ENCODE measurements at regions of chr12 and their contacts with region 1.

Region 1: GRCh38 chr12:54240971-54241588 is 38.8 kb downstream of the CBX5 start:
- DNase-seq: peak; percentile 80
- ATAC-seq: peak; percentile 95
- H3K4me3 ChIP-seq: no peak overlapping the region
- H3K27ac ChIP-seq: peak overlapping the region; percentile 45
- H3K4me1 ChIP-seq: peaks cover 16% of the 10 kb centered on the region
- H3K27me3 ChIP-seq: no peaks in the 10 kb centered on the region
- CTCF ChIP-seq: no peak
- EP300 ChIP-seq: 0 out of 4 replicates have a peak, but pooled peaks of 1 of the 2 experiments have one; percentile 39
- POLR2A ChIP-seq: no peak
- RAD21 ChIP-seq: no peak

Region 2: DNA sequence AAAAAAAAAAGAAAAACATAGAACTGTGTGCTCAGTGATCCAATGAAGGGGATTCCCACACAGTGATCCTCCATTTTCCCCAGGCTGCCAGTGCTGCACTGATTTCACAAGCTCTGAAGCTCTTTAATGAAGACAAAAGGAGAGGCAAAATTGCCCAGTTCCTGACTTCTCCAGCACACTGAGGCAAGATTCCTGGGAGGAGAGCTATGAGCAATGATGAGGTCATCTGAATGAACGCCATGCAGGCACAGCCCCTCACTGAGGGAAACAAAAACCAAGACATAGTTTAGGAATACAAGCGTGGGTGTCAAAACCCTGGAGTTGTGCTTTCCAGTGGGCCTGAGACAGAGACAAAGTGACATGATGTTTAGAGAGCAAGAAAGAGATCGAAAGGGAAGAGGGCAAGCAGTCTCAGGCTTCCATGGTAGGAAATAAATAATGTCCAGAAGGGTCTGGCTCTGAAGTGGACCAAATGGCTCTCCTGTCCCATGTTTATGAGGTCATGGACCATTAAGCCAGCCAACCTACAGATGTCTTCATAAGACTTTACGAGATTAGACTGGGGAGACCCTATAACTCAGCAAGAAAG is 11.4 kb before region 1 on chr12:
- CTCF ChIA-PET with region 1: interaction called, 13 read pairs
- POLR2A ChIA-PET with region 1: interaction called, 10 read pairs
- RAD21 ChIA-PET with region 1: interaction called, 4 read pairs
- SMC1A ChIA-PET with region 1: interaction called, 9 read pairs
- in situ Hi-C with region 1: no loop called
- intact Hi-C with region 1: no loop called
- DNase-seq: no peak
- ATAC-seq: peak; percentile 81
- H3K4me3 ChIP-seq: no peak overlapping the region
- H3K27ac ChIP-seq: no peak overlapping the region
- H3K4me1 ChIP-seq: peaks cover 5% of the 10 kb centered on the region; the same call in 1 of the 2 replicates
- H3K27me3 ChIP-seq: no peaks in the 10 kb centered on the region
- CTCF ChIP-seq: no peak
- EP300 ChIP-seq: no peak
- POLR2A ChIP-seq: no peak
- RAD21 ChIP-seq: no peak

Region 3: DNA sequence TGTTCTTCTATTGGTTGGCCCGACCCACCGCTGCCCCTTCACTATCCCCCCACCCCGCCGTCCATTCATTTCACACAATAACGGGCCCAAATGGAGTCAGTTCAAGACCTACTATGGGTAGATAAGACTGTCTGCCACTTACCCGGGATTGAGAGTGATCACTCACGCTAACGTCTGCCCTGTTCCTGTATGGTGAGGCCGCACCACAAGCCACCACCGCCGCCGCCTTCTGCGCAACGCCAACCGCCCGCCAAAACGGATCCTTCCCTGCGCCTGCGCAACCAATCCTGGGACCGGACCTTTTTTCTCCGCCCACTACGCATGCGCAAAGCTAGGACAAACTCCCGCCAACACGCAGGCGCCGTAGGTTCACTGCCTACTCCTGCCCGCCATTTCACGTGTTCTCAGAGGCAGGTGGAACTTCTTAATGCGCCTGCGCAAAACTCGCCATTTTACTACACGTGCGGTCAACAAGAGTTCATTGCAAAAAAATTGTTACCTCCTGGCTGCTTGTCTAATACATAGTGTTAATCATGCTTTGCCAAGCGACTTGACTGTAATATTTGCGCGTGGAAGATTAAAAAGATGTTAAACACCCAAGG is 38.9 kb after region 1 on chr12 and contains the start of gene CBX5:
- CTCF ChIA-PET with region 1: no interaction called
- POLR2A ChIA-PET with region 1: interaction called, 10 read pairs
- RAD21 ChIA-PET with region 1: no interaction called
- SMC1A ChIA-PET with region 1: interaction called, 8 read pairs
- in situ Hi-C with region 1: no loop called
- intact Hi-C with region 1: no loop called
- DNase-seq: peak; percentile 98
- ATAC-seq: peak; percentile 48
- H3K4me3 ChIP-seq: peak within 1 kb of the TSS; percentile 81
- H3K27ac ChIP-seq: peak within 1 kb of the TSS; percentile 99
- H3K4me1 ChIP-seq: peaks cover 18% of the 10 kb centered on the region
- H3K27me3 ChIP-seq: no peaks in the 10 kb centered on the region
- CTCF ChIP-seq: no peak
- EP300 ChIP-seq: no peak
- POLR2A ChIP-seq: peak; percentile 83
- RAD21 ChIP-seq: no peak
- polyA plus RNA-seq, gene CBX5: 66.9 to 67.1 TPM

Region 4: DNA sequence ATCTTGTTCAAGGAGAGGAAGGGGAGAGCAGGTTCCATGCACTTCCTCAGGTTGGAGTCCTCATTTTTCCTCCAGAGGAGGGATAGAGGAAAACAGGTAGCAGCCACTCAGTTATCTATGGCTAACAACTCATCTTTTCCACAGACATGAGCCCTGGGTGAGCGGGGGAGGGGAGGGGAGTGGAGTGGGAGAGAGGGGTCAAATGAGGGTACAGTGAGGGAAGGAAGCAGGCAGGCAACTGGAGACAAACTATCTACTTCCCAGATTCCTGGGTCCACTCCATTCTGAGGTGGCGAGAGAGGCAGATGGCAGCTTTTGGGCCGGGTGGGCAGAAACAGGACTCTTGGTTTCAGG is 146.0 kb after region 1 on chr12:
- CTCF ChIA-PET with region 1: no interaction called
- POLR2A ChIA-PET with region 1: no interaction called
- RAD21 ChIA-PET with region 1: no interaction called
- SMC1A ChIA-PET with region 1: no interaction called
- in situ Hi-C with region 1: no loop called
- intact Hi-C with region 1: no loop called
- DNase-seq: no peak
- ATAC-seq: no peak
- H3K4me3 ChIP-seq: no peak overlapping the region
- H3K27ac ChIP-seq: no peak overlapping the region
- H3K4me1 ChIP-seq: peaks cover 14% of the 10 kb centered on the region
- H3K27me3 ChIP-seq: no peaks in the 10 kb centered on the region
- CTCF ChIP-seq: no peak
- EP300 ChIP-seq: no peak
- POLR2A ChIP-seq: no peak
- RAD21 ChIP-seq: no peak

Measured in GM12878 (cell line).